ENCODE measurements at regions of chr5 and their contacts with region 1.

Region 1: GRCh38 chr5:153964880-153965645 is 73.6 kb downstream of the FAM114A2 start:
- DNase-seq: peak; percentile 33 to 82
- H3K4me3 ChIP-seq: no peak overlapping the region
- H3K27ac ChIP-seq: no peak overlapping the region
- H3K4me1 ChIP-seq: peaks cover 0 to 5% (median 2%) of the 10 kb centered on the region in 4 donors
- H3K27me3 ChIP-seq: peaks cover 0 to 8% (median 0%) of the 10 kb centered on the region in 3 donors
- CTCF ChIP-seq: peak in 5 of 7 experiments; percentile 67 to 79 (median 76)
- EP300 ChIP-seq: no peak
- POLR2A ChIP-seq: no peak

Region 2: DNA sequence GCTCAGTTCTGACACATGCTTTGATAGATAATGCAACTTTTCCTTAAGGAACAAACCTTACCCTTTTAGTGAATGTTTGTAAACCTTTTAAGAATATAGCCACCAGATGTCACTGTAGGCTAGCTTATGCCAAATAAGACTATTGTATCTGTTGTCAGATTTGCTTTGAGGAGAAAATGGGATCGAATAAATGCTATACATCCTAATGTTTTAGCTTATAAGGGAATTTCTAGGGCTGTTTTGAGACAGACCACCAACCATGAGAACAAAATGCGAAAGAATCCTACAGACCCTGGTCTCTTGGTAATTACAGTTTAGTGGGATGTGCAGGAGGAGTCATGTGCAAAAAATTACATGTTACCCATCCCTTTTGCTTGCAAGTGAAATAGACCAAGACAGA is 1432.3 kb before region 1 on chr5:
- intact Hi-C with region 1: loop called (anchors 10 kb)
- DNase-seq: peak in 1 of 2 donors; percentile 79
- H3K4me3 ChIP-seq: no peak overlapping the region
- H3K27ac ChIP-seq: no peak overlapping the region
- H3K4me1 ChIP-seq: no peaks in the 10 kb centered on the region
- H3K27me3 ChIP-seq: no peaks in the 10 kb centered on the region
- CTCF ChIP-seq: peak in 3 of 7 experiments; percentile 23 to 57 (median 40)
- EP300 ChIP-seq: no peak
- POLR2A ChIP-seq: no peak

Region 3: GRCh38 chr5:154031937-154032489 is 67.0 kb after region 1 on chr5:
- intact Hi-C with region 1: no loop called
- DNase-seq: no peak
- H3K4me3 ChIP-seq: no peak overlapping the region
- H3K27ac ChIP-seq: no peak overlapping the region
- H3K4me1 ChIP-seq: peaks cover 0 to 3% (median 0%) of the 10 kb centered on the region in 4 donors
- H3K27me3 ChIP-seq: no peaks in the 10 kb centered on the region
- CTCF ChIP-seq: no peak
- EP300 ChIP-seq: no peak
- POLR2A ChIP-seq: no peak